Posterior cingulate gyrus (tissue), 11 donors: ENCODE measurements at regions of chr2 and their contacts with region 1.

Region 1: GRCh38 chr2:223957092-223957851 is at the start of gene MRPL44:
- DNase-seq: peak; percentile 97 to 100 (median 99)

Region 2: GRCh38 chr2:223930103-223930976 is 26.9 kb before region 1 on chr2:
- intact Hi-C with region 1: loop called (anchors 2 kb)
- DNase-seq: peak; percentile 47 to 96 (median 72)

Region 3: GRCh38 chr2:223944703-223945531 is 12.4 kb before region 1 on chr2 and contains the start of gene WDFY1:
- intact Hi-C with region 1: loop called (anchors 1 kb)
- DNase-seq: peak; percentile 84 to 99 (median 92)

Region 4: DNA sequence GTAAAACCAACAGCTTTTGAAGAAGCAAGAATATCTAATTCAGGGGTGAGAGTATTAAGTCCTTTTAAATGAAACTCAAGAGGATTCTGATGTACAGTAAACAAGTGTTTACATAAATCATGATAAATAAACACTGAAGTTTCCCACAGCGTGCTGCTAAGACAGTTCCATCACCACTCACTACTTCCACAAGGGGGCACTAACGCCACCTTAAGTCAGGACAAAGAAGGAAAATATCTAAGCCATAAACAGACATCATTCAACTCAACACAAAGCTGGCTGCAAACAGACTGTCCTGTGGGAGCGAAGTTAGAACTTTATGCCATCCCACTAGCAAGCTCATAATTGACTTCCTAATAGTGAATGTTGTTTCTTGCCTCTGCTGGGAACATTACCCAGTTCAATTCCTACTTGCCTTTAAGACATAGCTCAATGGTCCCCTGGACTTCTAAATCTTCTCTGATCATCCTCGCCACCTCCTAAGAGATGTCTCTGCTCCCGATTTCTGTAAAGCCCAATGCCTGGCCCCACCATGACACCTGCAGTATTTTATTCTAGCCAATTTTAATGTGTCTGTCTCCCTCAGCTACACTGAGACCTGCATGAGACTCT is 36.5 kb after region 1 on chr2:
- intact Hi-C with region 1: no loop called
- DNase-seq: peak in 5 of 10 donors; percentile 33 to 69 (median 62)

Region 5: GRCh38 chr2:224098481-224099230 is 141.4 kb after region 1 on chr2:
- intact Hi-C with region 1: no loop called
- DNase-seq: no peak

Region 6: DNA sequence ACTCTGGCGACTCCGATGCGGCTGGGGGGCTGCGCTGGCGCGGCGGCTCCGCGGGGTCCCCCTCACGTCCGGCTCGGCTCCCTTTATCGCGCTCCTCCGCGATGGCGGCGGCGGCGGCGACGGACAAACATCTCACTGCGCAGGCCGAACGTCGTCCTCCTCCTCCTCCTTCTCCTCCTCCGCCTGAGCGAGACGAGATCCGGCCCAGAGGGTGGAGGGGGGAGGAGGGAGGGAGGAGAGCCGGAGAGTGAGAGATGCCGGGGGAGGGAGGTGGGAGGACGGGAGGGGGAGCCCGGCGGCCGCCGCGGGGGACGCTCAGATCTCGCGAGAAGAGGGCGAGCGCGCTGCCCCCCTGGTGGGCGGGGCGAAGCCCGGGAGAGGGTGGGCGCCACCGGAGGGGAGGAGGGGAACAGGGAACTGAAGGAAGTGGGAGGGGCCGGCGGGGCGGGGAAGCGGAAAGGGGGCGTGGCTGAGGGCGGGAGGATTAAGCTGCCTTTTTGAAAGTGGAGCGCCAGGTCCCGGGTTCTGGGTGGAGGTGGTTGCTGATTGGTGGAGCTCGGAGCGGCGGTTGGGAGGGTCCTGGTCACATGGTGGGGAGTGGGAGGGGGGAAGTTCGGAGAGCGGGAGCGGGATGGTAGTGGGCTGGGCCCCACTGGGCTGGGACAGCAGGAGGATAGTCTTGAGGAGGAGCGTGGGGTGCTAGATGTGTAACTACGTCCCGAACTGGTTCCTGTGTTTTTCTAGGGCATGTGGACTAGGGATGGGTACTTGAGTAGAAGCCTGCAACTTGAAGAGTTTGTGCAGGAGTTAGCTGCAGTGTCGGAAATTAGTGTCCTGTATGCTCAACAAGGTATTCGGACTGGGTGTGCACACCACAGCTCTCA is 628.2 kb after region 1 on chr2 and contains the start of gene CUL3:
- intact Hi-C with region 1: loop called (anchors 10 kb)
- DNase-seq: peak; percentile 98 to 100 (median 99)